ENCODE measurements at regions of chr11 and their contacts with region 1.

Region 1: GRCh38 chr11:66677599-66678375 is at the start of gene RBM4B:
- DNase-seq: peak; percentile 97
- H3K4me3 Mint-ChIP-seq: peak within 1 kb of the TSS; percentile 96
- H3K27ac Mint-ChIP-seq: peak within 1 kb of the TSS; percentile 97
- H3K4me1 Mint-ChIP-seq: peaks cover 27% of the 10 kb centered on the region
- H3K27me3 Mint-ChIP-seq: no peaks in the 10 kb centered on the region
- total RNA-seq, gene RBM4B: 10.9 to 11.7 TPM

Region 2: DNA sequence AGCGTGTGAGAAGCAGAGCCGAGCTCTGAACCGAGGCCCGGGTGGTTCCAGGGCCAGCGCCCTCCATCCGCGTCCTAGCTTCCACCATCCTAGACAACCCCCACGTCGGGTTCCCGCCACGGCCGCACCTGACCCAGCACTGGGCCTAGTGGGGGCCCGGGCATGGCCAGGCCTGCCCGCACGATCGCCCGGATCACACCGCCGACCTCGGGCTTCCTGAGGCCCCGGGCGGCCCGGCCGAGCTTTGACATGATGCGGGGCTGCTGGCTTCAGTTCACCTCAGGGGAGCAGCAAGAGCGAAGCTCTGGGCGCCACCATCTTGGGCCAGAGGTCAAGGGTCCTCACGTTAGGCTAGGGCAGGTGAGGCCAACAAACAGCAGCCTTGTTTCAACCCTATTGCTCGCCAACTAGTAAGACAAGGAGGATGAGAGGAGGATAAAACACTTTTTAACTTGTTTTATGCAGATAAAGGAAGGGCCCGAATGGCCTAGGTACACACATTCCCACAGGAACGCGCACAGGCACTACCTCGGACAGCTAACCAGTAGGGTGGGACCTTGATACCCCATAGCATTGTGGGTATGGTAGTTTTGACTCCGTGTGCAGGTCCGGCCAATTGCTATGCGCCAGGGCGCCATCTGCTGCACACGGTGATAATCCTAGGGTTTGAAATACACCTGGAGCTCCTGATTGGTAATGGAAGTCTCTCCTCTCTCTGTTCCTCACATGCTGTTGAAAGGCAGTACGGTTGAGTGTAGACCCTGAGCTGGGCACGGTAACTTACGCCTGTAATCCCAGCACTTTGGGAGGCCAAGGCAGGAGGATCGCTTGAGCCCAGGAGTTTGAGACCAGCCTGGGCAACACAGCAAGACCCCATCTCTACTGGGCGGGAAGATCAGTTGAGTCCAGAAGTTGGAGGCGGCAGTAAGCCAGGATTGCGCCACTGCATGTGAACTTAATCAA is 239.0 kb before region 1 on chr11 and contains the start of gene MRPL11:
- CTCF ChIA-PET with region 1: no interaction called
- intact Hi-C with region 1: loop called (anchors 1 kb)
- DNase-seq: peak; percentile 95
- H3K4me3 Mint-ChIP-seq: peak within 1 kb of the TSS; percentile 89
- H3K27ac Mint-ChIP-seq: peak within 1 kb of the TSS; percentile 99
- H3K4me1 Mint-ChIP-seq: peaks cover 12% of the 10 kb centered on the region
- H3K27me3 Mint-ChIP-seq: no peaks in the 10 kb centered on the region
- total RNA-seq, gene MRPL11: 143 to 144 TPM

Region 3: DNA sequence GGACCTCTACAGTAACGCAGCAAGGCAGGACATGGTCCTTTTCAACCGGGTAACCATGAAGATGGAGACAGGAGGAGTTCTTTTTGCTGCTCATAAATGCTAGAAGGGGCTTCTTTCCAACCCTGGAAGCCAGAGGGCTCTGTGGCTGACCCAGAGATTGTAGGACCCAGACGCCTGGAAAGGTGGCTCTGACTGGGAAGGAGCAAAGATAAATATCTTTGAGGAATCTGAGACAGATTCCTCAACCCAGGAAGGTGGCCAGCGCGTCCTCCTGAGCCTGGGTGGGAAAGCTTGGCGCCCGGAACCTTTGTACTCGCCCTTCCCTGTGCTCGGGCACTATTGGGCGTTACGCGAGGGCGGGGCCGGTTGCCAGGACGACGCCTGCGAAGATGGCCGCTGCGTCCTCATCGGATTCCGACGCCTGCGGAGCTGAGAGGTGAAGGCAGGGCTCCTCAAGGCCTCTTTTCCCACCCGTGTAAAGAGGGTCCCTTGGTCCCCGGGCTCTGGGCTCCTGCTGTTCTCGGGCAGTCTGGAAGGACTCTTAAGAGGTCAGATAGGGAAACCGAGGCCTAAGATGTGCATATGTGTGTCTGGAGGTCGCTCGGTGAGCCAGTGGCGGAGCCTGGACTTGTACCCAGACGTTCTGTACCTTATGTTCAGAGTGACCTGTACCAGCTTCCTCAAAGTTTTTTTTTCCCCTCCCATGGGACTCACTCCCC is 167.4 kb before region 1 on chr11 and contains the start of gene BBS1:
- CTCF ChIA-PET with region 1: interaction called, 3 read pairs
- intact Hi-C with region 1: loop called (anchors 1 kb)
- DNase-seq: peak; percentile 85
- H3K4me3 Mint-ChIP-seq: peak within 1 kb of the TSS; percentile 89
- H3K27ac Mint-ChIP-seq: no peak within 1 kb of the TSS
- H3K4me1 Mint-ChIP-seq: peaks cover 15% of the 10 kb centered on the region
- H3K27me3 Mint-ChIP-seq: no peaks in the 10 kb centered on the region
- total RNA-seq, gene BBS1: 10.1 to 10.9 TPM

Region 4: DNA sequence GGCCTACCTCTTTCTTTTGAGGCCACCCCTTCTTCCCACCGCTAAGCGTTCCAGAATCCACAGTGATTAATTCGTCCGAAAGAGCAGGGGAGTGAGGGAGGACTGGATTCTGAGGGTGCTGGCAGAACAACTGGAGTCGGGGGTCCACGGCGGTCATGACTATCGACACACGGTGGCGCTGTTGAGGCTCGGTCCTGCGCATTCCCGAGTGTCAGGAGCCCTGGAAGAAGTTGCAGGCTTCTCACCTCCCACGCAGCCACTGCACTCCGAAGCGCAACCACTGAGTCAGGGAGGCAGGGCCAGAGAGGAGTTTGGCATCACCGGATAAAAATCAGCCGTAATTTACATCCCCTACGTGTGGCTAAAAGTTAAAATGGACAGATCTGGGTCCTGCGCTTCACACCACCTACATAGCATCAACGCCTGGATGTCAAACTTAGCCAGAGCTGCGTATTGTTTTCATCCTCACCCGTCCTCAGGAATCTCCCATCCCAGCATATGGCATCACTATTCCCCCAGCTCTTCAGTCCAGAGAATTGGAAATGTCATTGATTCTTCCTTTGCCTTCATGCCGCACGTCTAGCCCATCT is 98.7 kb before region 1 on chr11:
- CTCF ChIA-PET with region 1: interaction called, 95 read pairs
- intact Hi-C with region 1: loop called (anchors 1 kb)
- DNase-seq: peak; percentile 89
- H3K4me3 Mint-ChIP-seq: no peak overlapping the region
- H3K27ac Mint-ChIP-seq: no peak overlapping the region
- H3K4me1 Mint-ChIP-seq: peaks cover 14% of the 10 kb centered on the region
- H3K27me3 Mint-ChIP-seq: no peaks in the 10 kb centered on the region

Region 5: GRCh38 chr11:66616379-66617154 is 61.2 kb before region 1 on chr11 and contains the start of gene RBM14:
- CTCF ChIA-PET with region 1: interaction called, 4 read pairs
- intact Hi-C with region 1: loop called (anchors 1 kb)
- DNase-seq: peak; percentile 99
- H3K4me3 Mint-ChIP-seq: peak within 1 kb of the TSS; percentile 98
- H3K27ac Mint-ChIP-seq: peak within 1 kb of the TSS; percentile 98
- H3K4me1 Mint-ChIP-seq: peaks cover 36% of the 10 kb centered on the region
- H3K27me3 Mint-ChIP-seq: no peaks in the 10 kb centered on the region
- total RNA-seq, gene RBM14: 160 to 173 TPM

Region 6: DNA sequence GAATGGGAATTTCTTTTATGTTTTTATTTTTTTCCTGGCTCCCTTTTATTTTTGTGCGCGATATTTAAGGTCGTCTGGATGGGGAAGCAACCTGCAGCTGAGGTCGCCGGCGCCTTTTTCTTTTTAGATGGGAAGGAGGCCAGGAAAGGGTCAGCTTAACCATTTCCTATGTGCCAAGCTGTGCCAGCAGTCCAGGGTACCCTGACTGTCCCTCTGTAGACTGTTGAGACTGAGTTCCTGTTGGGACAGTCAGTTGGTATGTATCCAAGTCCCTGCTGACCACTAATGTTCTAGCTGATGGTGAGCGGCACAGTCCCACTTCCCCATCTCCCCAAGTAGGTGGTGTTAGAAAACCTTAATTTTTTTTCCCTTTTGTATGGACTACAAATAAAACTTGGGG is 50.9 kb before region 1 on chr11:
- CTCF ChIA-PET with region 1: no interaction called
- intact Hi-C with region 1: no loop called
- DNase-seq: no peak
- H3K4me3 Mint-ChIP-seq: no peak overlapping the region
- H3K27ac Mint-ChIP-seq: peak overlapping the region; percentile 18
- H3K4me1 Mint-ChIP-seq: peaks cover 52% of the 10 kb centered on the region
- H3K27me3 Mint-ChIP-seq: no peaks in the 10 kb centered on the region

Region 7: DNA sequence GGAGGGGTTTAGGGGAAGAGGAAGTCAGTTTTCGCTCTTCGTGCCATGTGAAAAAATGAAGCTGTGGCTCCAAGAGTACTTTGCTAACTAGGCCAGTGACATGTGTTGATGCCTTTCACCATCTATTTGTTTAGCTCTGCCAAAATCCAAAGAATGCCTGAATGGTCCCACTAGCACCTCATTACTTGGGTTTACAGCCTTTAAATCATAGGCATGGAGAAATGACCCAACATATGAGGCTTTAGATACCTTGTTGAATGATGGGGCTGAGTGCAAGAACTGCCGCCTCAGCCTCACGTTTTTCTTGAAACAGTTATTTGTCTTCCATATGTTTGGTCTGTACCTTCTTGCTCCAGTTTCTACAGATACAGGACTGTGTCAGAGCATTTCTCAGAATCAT is 31.0 kb before region 1 on chr11:
- CTCF ChIA-PET with region 1: interaction called, 14 read pairs
- intact Hi-C with region 1: no loop called
- DNase-seq: no peak
- H3K4me3 Mint-ChIP-seq: no peak overlapping the region
- H3K27ac Mint-ChIP-seq: peak overlapping the region; percentile 38
- H3K4me1 Mint-ChIP-seq: peaks cover 80% of the 10 kb centered on the region
- H3K27me3 Mint-ChIP-seq: no peaks in the 10 kb centered on the region

Measured in activated naive CD4-positive, alpha-beta T cell treated with anti-CD3 and anti-CD28 coated beads for 36 hours (primary cell).